Dendritic cell treated with granulocyte-macrophage colony-stimulating factor and Interleukin-4, amounts not matched to agents 40 ng/mL and 50 ng/mL, for 4 days (primary cell): ENCODE measurements at regions of chr12 and their contacts with region 1.

Region 1: GRCh38 chr12:120710031-120710804 is at the start of gene UNC119B:
- H3K4me3 Mint-ChIP-seq: peak within 1 kb of the TSS; percentile 90
- H3K27ac Mint-ChIP-seq: peak within 1 kb of the TSS; percentile 80
- H3K4me1 Mint-ChIP-seq: peaks cover 27% of the 10 kb centered on the region
- H3K27me3 Mint-ChIP-seq: no peaks in the 10 kb centered on the region

Region 2: GRCh38 chr12:120583478-120584030 is 126.7 kb before region 1 on chr12:
- intact Hi-C with region 1: loop called (anchors 1 kb)
- H3K4me3 Mint-ChIP-seq: peak overlapping the region; percentile 42
- H3K27ac Mint-ChIP-seq: no peak overlapping the region
- H3K4me1 Mint-ChIP-seq: peaks cover 33% of the 10 kb centered on the region
- H3K27me3 Mint-ChIP-seq: peaks cover 32% of the 10 kb centered on the region

Region 3: GRCh38 chr12:120686690-120687577 is 23.3 kb before region 1 on chr12 and contains the start of gene MLEC:
- intact Hi-C with region 1: loop called (anchors 2 kb)
- H3K4me3 Mint-ChIP-seq: peak within 1 kb of the TSS; percentile 88
- H3K27ac Mint-ChIP-seq: peak within 1 kb of the TSS; percentile 98
- H3K4me1 Mint-ChIP-seq: peaks cover 65% of the 10 kb centered on the region
- H3K27me3 Mint-ChIP-seq: no peaks in the 10 kb centered on the region